HepG2 (cell line): ENCODE measurements at regions of chr15 and their contacts with region 1.

Region 1: DNA sequence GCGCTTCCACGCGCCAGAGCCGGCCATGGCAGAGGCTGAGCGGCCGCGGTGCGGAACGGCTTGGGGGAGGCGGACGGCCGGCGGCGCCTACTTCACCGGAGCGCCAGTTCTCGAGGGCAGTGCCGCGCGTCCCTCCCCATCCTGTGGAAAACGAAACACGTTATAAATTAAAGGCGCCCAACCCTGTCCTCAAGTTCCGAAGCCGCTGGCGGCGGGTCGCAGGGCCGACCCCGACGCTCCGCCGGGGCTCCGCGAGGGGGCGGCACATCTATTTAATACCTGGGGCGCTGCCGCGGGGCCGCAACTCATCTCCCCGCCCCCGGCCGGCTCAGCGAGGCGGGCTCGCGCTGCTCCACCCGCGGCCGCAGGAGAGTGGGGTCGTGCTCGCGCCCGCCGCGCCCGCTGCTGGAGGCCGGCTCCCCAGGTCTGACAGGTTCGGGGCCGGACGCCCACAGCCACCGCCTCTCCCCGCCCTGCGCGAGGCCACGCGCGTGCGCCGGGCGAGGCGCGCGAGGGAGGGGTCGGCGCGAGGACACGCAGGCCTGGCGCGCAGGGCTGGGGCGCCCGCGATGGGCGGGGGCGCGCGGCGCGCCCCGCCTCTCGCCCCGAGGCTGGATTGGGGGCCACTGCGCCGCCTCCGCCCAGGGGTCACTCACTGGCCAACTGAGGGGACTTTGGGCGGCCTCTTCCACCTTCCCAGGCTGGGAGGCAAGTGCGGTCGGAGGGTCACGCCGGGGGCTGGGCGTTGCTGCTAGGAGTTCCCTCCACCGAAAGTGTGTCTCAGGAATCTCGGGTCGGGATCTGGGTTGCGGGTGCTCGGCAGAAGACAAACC is at the start of gene SLC30A4:
- DNase-seq: no peak
- ATAC-seq: peak; percentile 84
- H3K4me3 ChIP-seq: peak within 1 kb of the TSS; percentile 38 to 66 (median 59)
- H3K27ac ChIP-seq: no peak within 1 kb of the TSS
- H3K4me1 ChIP-seq: peaks cover 18% of the 10 kb centered on the region
- H3K27me3 ChIP-seq: peaks cover 0 to 34% of the 10 kb centered on the region in 2 experiments; a peak in 3 of 5 replicates
- CTCF ChIP-seq: peak; percentile 29
- EP300 ChIP-seq: no peak
- POLR2A ChIP-seq: no peak
- RAD21 ChIP-seq: no peak; the same call in 1 of the 2 replicates
- total RNA-seq, gene SLC30A4: 0.04 TPM in 1 of 2 replicates, not detected in the other

Region 2: DNA sequence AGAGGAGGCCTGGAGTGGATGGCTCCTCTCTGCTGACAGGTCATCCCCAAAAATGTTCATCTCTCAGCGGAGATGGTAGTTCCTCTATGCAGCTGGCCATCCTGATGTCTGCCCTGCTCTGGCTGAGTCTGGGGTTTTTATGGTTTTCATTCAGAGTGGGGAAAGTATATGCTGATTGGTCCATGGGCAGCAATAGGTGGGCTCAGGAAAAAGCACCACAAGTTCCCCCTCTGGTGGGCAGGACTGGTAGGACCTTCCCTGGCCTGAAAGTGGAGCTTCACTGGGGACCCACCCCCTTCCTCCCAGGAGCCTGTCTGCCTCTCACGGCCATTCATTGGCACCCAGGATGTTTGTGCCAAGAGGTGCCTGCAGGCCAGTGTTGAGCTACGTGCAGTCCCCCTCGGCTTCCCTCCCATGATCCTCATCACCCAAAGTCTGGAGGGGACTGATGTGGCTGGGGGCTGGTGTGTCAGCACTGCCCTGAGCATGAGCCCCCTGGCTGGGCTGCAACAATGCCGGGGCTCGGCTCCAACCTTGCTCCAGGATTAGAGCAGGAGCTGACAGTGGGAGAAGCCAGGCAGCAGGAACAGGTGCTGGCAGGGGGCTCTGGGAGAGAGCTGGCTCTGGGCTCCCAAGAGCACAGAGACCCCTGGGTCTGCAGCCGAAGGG is 51.6 kb after region 1 on chr15:
- CTCF ChIA-PET with region 1: no interaction called
- POLR2A ChIA-PET with region 1: no interaction called
- in situ Hi-C with region 1: no loop called
- intact Hi-C with region 1: loop called (anchors 2 kb)
- DNase-seq: peak; percentile 61
- ATAC-seq: peak; percentile 99
- H3K4me3 ChIP-seq: peak overlapping the region in 1 of 3 experiments; percentile 63; a peak in 2 of 6 replicates
- H3K27ac ChIP-seq: no peak overlapping the region
- H3K4me1 ChIP-seq: peaks cover 13% of the 10 kb centered on the region
- H3K27me3 ChIP-seq: no peaks in the 10 kb centered on the region
- CTCF ChIP-seq: peak; percentile 74
- EP300 ChIP-seq: no peak
- POLR2A ChIP-seq: no peak
- RAD21 ChIP-seq: no peak

Region 3: DNA sequence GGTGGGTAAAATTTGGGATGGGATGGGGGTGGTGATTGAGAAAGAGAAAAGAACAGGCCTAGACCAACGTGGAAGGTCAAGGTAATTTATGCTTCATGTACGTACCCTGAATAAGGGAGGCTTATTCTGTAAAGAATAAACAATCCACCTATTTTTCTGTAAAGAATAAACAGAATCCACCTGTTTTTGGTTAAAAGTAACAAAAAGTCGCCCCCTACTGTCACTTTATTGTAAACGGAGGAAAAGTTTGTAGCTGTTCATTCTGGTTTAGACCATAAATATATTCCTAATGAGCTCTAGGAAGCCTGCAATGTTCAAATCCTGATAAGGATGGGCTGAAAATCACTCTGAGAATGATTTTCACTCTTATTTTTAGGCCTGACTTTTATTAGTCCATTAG is 88.8 kb after region 1 on chr15:
- CTCF ChIA-PET with region 1: interaction called, 3 read pairs
- POLR2A ChIA-PET with region 1: no interaction called
- in situ Hi-C with region 1: no loop called
- intact Hi-C with region 1: loop called (anchors 2 kb)
- DNase-seq: peak; percentile 12
- ATAC-seq: no peak
- H3K4me3 ChIP-seq: no peak overlapping the region
- H3K27ac ChIP-seq: no peak overlapping the region
- H3K4me1 ChIP-seq: no peaks in the 10 kb centered on the region; the same call in 1 of the 2 replicates
- H3K27me3 ChIP-seq: no peaks in the 10 kb centered on the region
- CTCF ChIP-seq: peak; percentile 37
- EP300 ChIP-seq: no peak
- POLR2A ChIP-seq: no peak
- RAD21 ChIP-seq: no peak